Colonic mucosa (tissue), 4 donors: ENCODE measurements at regions of chr9 and their contacts with region 1.

Region 1: DNA sequence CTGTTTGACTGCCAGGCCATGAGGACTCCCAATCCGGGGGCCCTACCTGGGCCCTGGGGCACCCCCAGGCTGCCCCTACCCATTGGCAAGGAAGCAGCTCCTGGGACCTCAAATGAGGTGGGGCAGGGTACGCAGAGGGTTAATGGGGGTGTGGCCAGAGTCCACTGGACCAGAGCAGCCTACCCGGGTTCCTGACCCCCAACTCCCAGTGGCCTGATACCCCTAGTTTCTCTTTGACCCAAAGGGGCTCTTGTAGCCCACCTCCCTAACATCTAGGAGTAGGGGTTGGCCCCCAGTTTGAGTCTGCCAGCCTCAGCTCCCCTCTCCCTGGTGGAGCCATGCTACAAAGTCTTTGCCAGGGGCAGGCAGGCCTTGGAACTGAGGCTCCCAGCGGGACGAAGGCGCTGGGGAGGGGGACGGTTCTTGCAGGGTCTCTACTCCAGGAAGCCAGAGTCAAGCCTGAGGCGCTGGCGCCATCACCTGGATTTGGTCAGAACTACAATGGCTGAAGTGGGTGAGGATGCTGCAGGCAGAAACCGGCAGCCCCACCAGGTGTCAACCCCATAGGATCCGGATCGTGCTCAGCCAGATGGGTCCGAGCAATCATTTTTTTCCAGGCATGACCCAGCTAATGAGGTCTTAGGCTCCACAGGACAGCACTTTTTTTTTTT is 8.4 kb upstream of the CERCAM start:
- DNase-seq: peak; percentile 35
- H3K4me3 ChIP-seq: no peak overlapping the region
- H3K27ac ChIP-seq: no peak overlapping the region
- H3K4me1 ChIP-seq: no peaks in the 10 kb centered on the region
- H3K27me3 ChIP-seq: peaks cover 4% of the 10 kb centered on the region
- CTCF ChIP-seq: no peak

Region 2: GRCh38 chr9:128296337-128297220 is 115.7 kb before region 1 on chr9:
- intact Hi-C with region 1: loop called (anchors 10 kb)
- DNase-seq: peak; percentile 45
- H3K4me3 ChIP-seq: no peak overlapping the region
- H3K27ac ChIP-seq: peak overlapping the region; percentile 61
- H3K4me1 ChIP-seq: peaks cover 8% of the 10 kb centered on the region
- H3K27me3 ChIP-seq: no peaks in the 10 kb centered on the region
- CTCF ChIP-seq: no peak

Region 3: DNA sequence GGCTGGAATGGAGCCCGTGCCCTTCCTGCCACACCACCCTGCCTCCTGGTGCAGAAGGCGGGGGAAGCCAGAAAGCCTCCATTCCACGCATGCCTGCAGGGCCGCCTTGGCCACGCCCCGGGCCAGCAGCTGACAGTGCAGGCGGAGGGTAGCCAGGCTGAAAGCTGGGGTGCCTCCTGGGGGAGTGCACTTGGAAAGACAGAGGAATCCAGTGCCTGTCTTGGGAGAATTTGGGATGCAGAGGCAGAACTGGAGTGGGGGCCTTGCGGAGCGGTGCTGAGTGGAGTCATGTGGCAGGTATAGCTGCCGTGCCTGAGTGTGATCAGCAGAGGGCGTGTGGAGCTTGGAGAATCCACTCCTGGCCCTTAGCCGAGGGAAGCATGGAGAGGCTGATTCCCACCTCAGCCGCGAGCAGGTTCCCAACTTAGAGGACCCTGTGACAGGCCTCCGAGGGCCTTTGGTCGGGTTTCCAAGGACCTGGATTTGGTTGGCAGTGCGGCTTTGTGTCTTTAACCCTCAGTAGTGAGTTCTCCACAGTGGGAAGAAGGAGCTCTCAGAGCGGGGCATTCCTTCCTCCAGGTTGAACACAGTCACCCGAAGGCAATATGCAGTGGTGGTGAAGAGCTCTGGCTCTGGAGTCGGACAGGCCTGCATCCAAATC is 50.1 kb before region 1 on chr9:
- intact Hi-C with region 1: loop called (anchors 5 kb)
- DNase-seq: peak; percentile 88
- H3K4me3 ChIP-seq: peak overlapping the region; percentile 33
- H3K27ac ChIP-seq: peak overlapping the region; percentile 38
- H3K4me1 ChIP-seq: peaks cover 4% of the 10 kb centered on the region
- H3K27me3 ChIP-seq: no peaks in the 10 kb centered on the region
- CTCF ChIP-seq: peak; percentile 83